Panc1 (cell line): ENCODE measurements at regions of chr7 and their contacts with region 1.

Region 1: DNA sequence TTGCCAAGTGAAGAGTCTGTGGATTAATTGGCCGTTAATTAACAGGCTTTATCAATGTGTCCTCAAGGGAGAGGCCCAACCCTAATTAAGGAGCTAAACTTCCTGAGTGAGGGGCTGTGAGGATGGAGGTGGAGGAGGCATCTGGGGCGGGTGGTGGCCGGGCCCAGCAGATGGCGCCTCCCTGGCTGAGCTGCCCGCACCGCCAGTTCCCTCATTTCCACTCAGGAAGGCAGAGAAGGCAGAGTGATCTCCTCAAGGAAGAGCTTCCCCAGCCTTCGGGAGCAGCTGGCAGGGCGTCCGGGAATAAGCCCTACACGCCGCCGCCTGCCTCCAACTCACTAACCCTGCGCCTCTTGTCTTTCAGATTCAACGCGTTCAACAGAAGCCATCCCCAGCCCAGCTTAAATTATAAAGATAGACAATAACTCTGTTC is 112.2 kb downstream of the CYTH3 start:
- DNase-seq: no peak
- ATAC-seq: peak; percentile 77; the same call in 1 of the 2 replicates
- H3K4me3 ChIP-seq: no peak overlapping the region
- H3K27ac ChIP-seq: no peak overlapping the region
- H3K4me1 ChIP-seq: no peaks in the 10 kb centered on the region
- H3K27me3 ChIP-seq: no peaks in the 10 kb centered on the region
- CTCF ChIP-seq: no peak; the same call in 1 of the 2 replicates

Region 2: DNA sequence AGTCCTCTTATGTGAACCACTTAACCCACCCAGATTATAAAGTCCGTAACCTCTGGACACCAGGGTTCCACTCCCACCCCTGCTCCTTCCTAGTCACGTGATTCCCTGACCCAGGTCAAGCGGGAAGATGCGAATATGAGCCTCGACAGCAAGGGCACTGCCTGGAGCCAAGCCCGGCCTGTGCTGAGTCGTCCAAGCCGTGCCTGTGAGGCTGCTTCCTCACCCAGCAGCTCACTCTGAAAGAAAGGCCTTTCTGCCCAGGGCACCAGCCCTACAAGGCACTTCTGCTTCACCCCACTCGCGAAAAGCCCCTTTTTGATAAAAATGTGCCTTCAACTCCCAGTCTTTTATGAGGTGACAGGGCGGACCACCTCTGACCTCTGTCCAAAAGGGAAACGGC is 26.4 kb after region 1 on chr7:
- CTCF ChIA-PET with region 1: interaction called, 13 read pairs
- POLR2A ChIA-PET with region 1: no interaction called
- in situ Hi-C with region 1: no loop called
- intact Hi-C with region 1: no loop called
- DNase-seq: no peak
- ATAC-seq: 0 out of 2 replicates have a peak, but pooled peaks have one; percentile 47
- H3K4me3 ChIP-seq: no peak overlapping the region
- H3K27ac ChIP-seq: no peak overlapping the region
- H3K4me1 ChIP-seq: no peaks in the 10 kb centered on the region
- H3K27me3 ChIP-seq: no peaks in the 10 kb centered on the region
- CTCF ChIP-seq: no peak

Region 3: DNA sequence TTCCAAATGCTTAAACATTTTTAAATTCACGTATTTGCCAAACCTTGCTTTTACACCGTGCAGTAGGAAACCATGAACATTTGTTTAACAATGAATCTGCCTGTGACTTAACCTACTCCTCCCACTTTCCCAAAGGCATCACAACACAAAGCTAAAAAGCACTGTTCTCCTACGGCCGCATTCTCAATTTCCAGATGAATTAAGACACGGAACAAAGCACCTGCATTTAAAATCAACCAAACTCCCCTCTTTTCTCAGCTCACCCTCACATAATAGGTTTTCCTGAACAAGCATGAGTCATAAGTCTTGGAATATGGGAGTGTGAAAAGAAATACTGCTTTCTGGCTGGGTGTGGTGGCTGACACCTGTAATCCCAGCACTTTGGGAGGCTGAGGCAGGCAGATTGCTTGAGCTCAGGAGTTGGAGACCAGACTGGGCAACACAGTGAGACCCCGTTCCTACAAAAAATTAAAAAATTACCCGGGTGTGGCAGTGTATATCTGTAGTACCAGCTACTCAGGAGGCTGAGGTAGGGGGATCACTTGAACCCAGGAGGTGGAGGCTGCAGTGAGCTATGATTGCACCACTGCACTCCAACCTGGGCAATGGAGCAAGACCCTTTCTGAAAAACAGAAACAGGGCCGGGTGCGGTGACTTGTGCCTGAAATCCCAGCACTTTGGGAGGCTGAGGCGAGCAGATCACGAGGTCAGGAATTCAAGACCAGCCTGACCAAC is 163.9 kb after region 1 on chr7:
- CTCF ChIA-PET with region 1: interaction called, 5 read pairs
- POLR2A ChIA-PET with region 1: no interaction called
- in situ Hi-C with region 1: no loop called
- intact Hi-C with region 1: loop called (anchors 2 kb)
- DNase-seq: no peak
- ATAC-seq: no peak
- H3K4me3 ChIP-seq: no peak overlapping the region
- H3K27ac ChIP-seq: no peak overlapping the region
- H3K4me1 ChIP-seq: no peaks in the 10 kb centered on the region
- H3K27me3 ChIP-seq: no peaks in the 10 kb centered on the region
- CTCF ChIP-seq: no peak

Region 4: DNA sequence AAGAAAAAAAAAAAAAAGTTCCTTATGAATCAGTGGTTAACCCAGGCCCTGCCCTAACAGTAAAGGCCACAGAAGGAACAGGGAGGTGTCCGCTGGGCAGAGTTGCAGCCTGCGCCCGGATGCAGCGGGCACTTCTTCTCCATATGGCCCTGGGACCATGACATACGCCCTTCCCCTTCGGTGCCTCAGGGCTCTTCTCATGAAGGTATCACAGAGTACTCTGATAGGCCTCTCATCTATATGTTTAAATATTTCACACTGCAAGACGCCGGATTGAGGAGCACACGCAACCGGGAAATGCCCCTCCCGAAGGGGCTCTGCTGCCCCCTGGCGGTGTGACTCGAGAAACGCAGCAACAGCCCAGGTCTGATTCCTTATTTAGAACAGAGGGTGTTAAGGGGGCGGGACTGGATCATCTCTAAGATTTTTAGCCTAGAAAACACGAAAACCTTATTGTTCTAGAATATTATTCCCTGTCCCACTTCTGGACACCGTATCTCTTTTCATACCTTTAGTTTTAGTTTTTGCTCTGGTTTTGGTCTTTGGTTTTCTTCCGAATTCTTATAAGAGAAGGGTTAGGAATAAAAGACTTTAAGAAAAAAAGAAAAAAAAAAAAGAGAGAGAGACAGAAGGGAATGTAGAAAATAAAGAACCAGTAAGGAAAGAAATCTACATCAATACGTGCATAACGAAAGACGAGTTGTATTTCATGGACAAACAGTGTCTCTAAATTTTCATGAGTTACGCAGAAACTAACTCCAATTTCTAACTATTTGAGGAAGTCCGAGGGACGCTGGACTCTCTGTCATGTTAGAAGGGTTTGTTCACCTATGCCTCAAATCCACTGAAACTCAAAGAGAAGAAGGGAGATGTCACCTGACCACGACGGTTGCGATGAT is 275.5 kb after region 1 on chr7:
- CTCF ChIA-PET with region 1: no interaction called
- POLR2A ChIA-PET with region 1: no interaction called
- in situ Hi-C with region 1: no loop called
- intact Hi-C with region 1: loop called (anchors 10 kb)
- DNase-seq: no peak
- ATAC-seq: peak; percentile 92
- H3K4me3 ChIP-seq: no peak overlapping the region
- H3K27ac ChIP-seq: no peak overlapping the region
- H3K4me1 ChIP-seq: peaks cover 2% of the 10 kb centered on the region; the same call in 1 of the 2 replicates
- H3K27me3 ChIP-seq: no peaks in the 10 kb centered on the region
- CTCF ChIP-seq: peak; percentile 100